B cell (primary cell): ENCODE measurements at regions of chr3 and their contacts with region 1.

Region 1: GRCh38 chr3:15081960-15082664 is 16.8 kb downstream of the RBSN start:
- DNase-seq: no peak
- ATAC-seq: no peak
- H3K4me3 ChIP-seq: no peak overlapping the region
- H3K4me3 Mint-ChIP-seq: no peak overlapping the region
- H3K27ac ChIP-seq: no peak overlapping the region
- H3K27ac Mint-ChIP-seq: no peak overlapping the region
- H3K4me1 ChIP-seq: no peaks in the 10 kb centered on the region
- H3K4me1 Mint-ChIP-seq: no peaks in the 10 kb centered on the region
- H3K27me3 ChIP-seq: no peaks in the 10 kb centered on the region
- H3K27me3 Mint-ChIP-seq: no peaks in the 10 kb centered on the region
- CTCF ChIP-seq: no peak

Region 2: DNA sequence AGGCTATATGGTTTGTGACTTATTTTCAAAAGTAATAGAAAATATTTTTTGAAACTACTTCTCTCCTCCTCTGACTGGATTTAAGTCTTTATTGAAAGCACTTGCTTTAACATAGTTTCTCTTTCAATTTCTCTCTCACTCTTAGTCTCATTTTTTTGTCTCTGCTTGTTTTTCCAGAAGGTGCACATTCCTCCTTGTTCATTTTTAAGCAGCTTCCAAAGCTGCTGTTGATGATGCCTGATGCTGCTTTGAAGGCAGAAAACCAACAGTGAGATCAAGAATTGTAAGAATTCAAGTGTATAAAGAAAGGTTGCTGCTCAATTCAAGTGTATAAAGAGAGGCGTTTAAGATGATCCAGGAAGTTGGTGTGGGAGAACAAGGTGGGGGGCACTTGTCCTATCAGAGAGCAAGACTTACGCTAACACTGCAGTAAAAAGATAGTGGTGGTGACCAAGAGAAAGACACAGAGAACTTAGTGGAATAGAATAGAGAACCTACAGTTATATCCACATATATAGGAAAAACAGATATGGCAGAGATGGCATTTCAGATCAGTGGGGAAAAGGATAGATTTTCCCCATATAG is 122.7 kb before region 1 on chr3:
- CTCF ChIA-PET with region 1: no interaction called
- POLR2A ChIA-PET with region 1: interaction called, 10 read pairs
- intact Hi-C with region 1: no loop called
- DNase-seq: peak; percentile 44
- ATAC-seq: peak; percentile 31
- H3K4me3 ChIP-seq: peak overlapping the region in 4 of 5 experiments; percentile 22 to 50 (median 36)
- H3K4me3 Mint-ChIP-seq: peak overlapping the region; percentile 87
- H3K27ac ChIP-seq: peak overlapping the region; percentile 54 to 76
- H3K27ac Mint-ChIP-seq: peak overlapping the region; percentile 92
- H3K4me1 ChIP-seq: peaks cover 26 to 27% of the 10 kb centered on the region in 2 donors
- H3K4me1 Mint-ChIP-seq: peaks cover 41% of the 10 kb centered on the region
- H3K27me3 ChIP-seq: no peaks in the 10 kb centered on the region
- H3K27me3 Mint-ChIP-seq: no peaks in the 10 kb centered on the region
- CTCF ChIP-seq: no peak